ENCODE measurements at regions of chr15 and their contacts with region 1.

Region 1: GRCh38 chr15:79887054-79887915 is 9.5 kb downstream of the MTHFS start:
- DNase-seq: no peak
- H3K4me3 Mint-ChIP-seq: no peak overlapping the region
- H3K27ac Mint-ChIP-seq: no peak overlapping the region
- H3K4me1 Mint-ChIP-seq: peaks cover 25% of the 10 kb centered on the region
- H3K27me3 Mint-ChIP-seq: no peaks in the 10 kb centered on the region

Region 2: DNA sequence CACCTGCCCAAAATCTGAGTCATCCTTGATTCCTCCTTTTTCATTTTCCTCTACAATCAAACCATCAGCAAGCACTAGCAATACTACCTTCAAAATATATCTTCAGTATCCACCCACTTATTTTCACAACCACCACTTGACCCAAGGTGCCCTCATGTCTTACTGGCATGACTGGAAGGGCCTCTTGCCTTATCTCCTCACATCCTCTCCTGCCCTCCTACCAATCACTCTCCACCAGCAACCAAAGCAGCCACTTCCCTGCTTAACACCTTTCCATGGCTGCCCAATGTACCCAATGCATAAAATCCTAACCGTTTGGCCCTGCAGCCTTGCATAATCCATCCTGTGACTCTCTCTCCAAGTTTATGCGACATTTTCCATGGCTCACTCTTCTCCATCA is 66.5 kb before region 1 on chr15:
- intact Hi-C with region 1: loop called (anchors 10 kb)
- DNase-seq: no peak
- H3K4me3 Mint-ChIP-seq: no peak overlapping the region
- H3K27ac Mint-ChIP-seq: no peak overlapping the region
- H3K4me1 Mint-ChIP-seq: no peaks in the 10 kb centered on the region
- H3K27me3 Mint-ChIP-seq: no peaks in the 10 kb centered on the region

Region 3: DNA sequence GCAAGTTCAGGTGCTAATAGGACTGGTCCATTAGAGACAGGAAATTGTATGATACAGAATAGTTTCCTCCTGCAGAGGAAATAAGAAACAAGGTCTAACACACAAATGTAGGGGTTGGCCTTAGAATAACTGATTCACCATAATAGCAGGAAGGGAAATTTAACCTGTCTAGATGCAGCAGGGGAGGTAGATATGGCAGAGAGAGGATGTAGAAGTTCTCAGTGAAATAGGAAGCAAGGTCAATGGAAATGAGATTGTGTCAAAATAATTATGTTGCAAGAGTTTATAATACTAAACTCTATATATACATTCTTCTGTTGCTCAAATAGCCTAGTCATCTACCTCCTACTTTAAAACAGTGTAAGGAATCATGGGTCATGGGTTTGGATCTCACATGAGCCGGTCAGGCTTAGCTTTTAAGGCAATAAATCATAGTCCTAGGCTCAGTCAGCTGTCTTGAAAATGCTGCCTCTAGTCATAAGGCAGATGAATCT is 66.7 kb after region 1 on chr15:
- intact Hi-C with region 1: no loop called
- DNase-seq: no peak
- H3K4me3 Mint-ChIP-seq: no peak overlapping the region
- H3K27ac Mint-ChIP-seq: no peak overlapping the region
- H3K4me1 Mint-ChIP-seq: peaks cover 24% of the 10 kb centered on the region
- H3K27me3 Mint-ChIP-seq: no peaks in the 10 kb centered on the region